ENCODE measurements at regions of chr1 and their contacts with region 1.

Region 1: DNA sequence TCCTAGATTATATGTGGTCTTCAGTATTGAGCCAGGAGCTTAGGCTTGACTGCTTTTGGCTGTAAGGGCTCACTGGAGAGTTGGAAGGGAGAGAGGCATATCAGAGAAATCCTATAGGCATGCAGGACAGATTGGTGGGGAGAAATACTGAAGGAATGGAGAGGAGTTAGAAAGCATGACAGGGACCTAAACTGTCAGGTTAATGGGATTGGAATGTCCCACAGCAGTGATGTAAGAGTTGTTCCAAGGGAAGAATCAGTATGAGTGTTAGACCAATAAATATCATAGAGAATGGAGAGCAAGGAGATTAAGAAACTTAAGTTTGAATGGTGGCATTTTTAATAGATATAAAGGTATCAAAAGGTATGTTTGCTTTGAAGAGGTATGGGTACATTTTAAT is 39.7 kb downstream of the SLC35A3 start:
- DNase-seq: no peak
- ATAC-seq: no peak
- H3K4me3 ChIP-seq: no peak overlapping the region
- H3K27ac ChIP-seq: no peak overlapping the region
- H3K4me1 ChIP-seq: peaks cover 0 to 9% (median 0%) of the 10 kb centered on the region in 9 donors
- H3K27me3 ChIP-seq: no peaks in the 10 kb centered on the region
- CTCF ChIP-seq: no peak

Region 2: GRCh38 chr1:99749504-99750347 is 259.7 kb before region 1 on chr1:
- intact Hi-C with region 1: no loop called
- DNase-seq: no peak
- ATAC-seq: peak in 1 of 8 donors; percentile 32
- H3K4me3 ChIP-seq: no peak overlapping the region
- H3K27ac ChIP-seq: no peak overlapping the region
- H3K4me1 ChIP-seq: peaks cover 0 to 11% (median 0%) of the 10 kb centered on the region in 9 donors
- H3K27me3 ChIP-seq: no peaks in the 10 kb centered on the region
- CTCF ChIP-seq: no peak

Region 3: DNA sequence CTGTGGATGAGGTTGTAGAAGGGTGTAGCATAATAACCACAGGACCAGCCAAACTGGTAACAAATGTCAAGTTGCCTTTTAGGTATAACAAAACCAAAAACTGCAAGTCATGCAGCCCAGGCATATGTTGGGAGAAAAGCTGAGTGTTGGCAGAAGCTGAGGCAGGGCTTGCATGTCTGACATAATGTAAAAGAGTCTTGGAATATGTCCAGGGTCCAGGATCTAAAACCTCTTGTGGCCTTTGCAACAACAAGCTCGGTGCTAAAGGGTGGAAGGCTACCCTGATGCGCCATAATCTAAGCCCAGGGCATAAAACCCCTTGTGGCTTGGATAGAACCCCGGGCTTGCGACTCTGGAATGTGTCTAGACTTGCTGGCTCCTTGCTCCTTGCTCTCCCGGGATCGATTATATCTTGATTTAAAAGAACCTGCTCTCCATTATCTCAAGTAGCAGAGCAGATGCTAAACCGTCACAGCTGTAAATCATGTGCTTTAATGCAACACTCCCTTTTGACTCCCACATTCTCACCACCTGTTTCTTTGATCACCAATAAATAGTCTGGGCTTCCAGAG is 66.1 kb before region 1 on chr1:
- intact Hi-C with region 1: loop called in 1 of 10 experiments (anchors 10 kb)
- DNase-seq: no peak
- ATAC-seq: no peak
- H3K4me3 ChIP-seq: no peak overlapping the region
- H3K27ac ChIP-seq: no peak overlapping the region
- H3K4me1 ChIP-seq: peaks cover 0 to 3% (median 0%) of the 10 kb centered on the region in 9 donors
- H3K27me3 ChIP-seq: no peaks in the 10 kb centered on the region
- CTCF ChIP-seq: no peak

Region 4: GRCh38 chr1:100168051-100168450 is 158.6 kb after region 1 on chr1:
- intact Hi-C with region 1: no loop called
- DNase-seq: no peak
- ATAC-seq: no peak
- H3K4me3 ChIP-seq: no peak overlapping the region
- H3K27ac ChIP-seq: no peak overlapping the region
- H3K4me1 ChIP-seq: peaks cover 0 to 16% (median 3%) of the 10 kb centered on the region in 9 donors
- H3K27me3 ChIP-seq: no peaks in the 10 kb centered on the region
- CTCF ChIP-seq: no peak

Region 5: DNA sequence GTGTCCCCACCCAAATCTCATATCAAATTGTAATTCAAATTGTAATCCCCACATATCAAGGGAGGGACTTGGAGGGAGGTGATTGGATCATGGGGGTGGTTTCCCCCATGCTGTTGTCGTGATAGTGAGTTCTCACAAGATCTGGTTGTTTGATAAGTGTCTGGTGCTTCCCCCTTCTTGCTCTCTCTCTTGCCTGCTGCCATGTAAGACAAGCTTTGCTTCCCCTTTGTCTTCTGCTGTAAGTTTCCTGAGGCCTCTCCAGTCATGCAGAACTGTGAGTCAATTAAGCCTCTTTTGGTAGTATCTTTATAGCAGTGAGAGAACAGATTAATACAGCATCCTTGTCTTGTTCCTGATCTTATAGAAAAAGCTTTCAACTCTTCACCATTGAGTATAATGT is 175.1 kb after region 1 on chr1:
- intact Hi-C with region 1: no loop called
- DNase-seq: no peak
- ATAC-seq: no peak
- H3K4me3 ChIP-seq: no peak overlapping the region
- H3K27ac ChIP-seq: no peak overlapping the region
- H3K4me1 ChIP-seq: peaks cover 0 to 18% (median 5%) of the 10 kb centered on the region in 9 donors
- H3K27me3 ChIP-seq: no peaks in the 10 kb centered on the region
- CTCF ChIP-seq: no peak

Measured in heart right ventricle (tissue), 16 donors.